MCF 10A (cell line): ENCODE measurements at regions of chr1 and their contacts with region 1.

Region 1: DNA sequence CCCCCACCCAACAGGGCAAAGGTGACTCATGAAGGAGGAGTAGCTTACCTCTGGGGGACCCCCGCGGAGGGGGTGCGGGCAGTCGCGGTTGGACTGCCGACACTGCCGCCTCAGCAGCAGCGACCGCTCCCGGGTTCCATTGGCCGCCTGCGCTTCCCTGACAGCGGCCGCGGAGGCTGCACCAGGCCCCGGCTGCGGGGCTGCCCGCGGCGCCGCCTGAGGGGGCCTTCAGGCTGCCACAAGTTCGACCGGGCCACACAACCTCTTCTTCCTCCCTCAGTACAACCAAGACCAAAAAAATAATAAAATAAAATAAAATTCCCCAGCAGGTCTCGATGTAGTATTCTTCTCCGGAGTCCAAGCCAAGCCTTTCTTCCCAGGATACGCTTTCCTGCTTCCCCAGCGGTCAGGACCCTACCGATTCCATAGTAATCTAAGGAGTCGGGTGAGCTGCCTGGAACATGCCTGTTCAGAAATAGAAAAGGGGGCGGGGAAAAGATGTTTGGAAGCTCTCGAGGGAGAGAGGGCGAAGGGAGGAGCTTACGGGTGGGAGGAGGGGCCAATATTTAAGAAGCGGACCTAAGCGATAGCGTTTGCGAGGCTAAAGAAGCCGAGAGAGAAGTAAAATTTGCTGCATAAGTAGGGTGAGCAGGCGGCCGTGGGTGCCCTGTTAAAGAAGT is at the start of gene PI4KB:
- DNase-seq: peak; percentile 100
- H3K4me3 Mint-ChIP-seq: peak within 1 kb of the TSS; percentile 89
- H3K27ac Mint-ChIP-seq: peak within 1 kb of the TSS; percentile 90
- H3K4me1 Mint-ChIP-seq: peaks cover 36% of the 10 kb centered on the region
- H3K27me3 Mint-ChIP-seq: no peaks in the 10 kb centered on the region
- CTCF ChIP-seq: no peak
- total RNA-seq, gene PI4KB: 75.3 and 90.1 TPM in 2 replicates

Region 2: DNA sequence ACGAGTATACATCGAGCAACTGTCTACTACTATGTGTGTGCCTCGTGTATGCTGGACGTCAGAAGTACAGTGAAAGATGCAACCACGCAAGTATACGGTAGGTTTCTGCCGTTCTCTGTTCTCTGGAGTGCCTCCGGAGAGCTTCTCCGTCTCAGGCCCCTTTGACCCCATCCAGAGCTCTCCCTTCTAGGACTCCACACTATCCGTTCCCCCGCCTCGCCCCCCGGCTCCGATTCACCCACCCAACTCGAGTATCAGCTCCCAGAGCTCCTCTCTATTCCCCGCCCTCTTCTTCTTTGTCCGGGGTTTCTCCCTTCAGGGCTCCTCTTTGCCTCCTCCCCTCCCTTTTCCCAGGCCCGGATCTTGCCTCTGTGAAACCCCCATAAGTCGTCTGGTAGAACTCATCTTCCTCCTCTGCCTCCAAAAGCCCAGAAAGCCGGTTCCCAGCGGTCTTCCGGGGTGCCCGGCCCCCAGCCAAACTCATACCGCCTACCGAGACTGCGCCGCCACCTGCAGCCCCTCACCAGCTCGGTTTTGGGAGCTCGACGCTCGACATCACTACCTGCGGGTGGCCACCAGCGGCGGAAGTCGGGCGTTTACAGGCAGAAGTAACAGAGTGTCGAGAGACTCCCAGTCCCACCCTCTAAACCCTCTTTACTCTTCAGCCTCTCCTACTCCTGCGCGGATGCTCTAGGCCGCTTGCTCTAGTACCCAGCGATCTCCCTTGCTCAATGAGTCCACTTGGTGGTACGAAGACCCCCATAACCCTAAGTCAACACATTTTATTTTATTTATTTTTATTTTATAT is 137.5 kb before region 1 on chr1 and contains the start of gene VPS72:
- CTCF ChIA-PET with region 1: no interaction called
- POLR2A ChIA-PET with region 1: interaction called, 15 read pairs
- intact Hi-C with region 1: loop called (anchors 5 kb)
- DNase-seq: peak; percentile 93
- H3K4me3 Mint-ChIP-seq: peak within 1 kb of the TSS; percentile 83
- H3K27ac Mint-ChIP-seq: peak within 1 kb of the TSS; percentile 90
- H3K4me1 Mint-ChIP-seq: peaks cover 33% of the 10 kb centered on the region
- H3K27me3 Mint-ChIP-seq: no peaks in the 10 kb centered on the region
- CTCF ChIP-seq: no peak
- total RNA-seq, gene VPS72: 106 and 108 TPM in 2 replicates

Region 3: DNA sequence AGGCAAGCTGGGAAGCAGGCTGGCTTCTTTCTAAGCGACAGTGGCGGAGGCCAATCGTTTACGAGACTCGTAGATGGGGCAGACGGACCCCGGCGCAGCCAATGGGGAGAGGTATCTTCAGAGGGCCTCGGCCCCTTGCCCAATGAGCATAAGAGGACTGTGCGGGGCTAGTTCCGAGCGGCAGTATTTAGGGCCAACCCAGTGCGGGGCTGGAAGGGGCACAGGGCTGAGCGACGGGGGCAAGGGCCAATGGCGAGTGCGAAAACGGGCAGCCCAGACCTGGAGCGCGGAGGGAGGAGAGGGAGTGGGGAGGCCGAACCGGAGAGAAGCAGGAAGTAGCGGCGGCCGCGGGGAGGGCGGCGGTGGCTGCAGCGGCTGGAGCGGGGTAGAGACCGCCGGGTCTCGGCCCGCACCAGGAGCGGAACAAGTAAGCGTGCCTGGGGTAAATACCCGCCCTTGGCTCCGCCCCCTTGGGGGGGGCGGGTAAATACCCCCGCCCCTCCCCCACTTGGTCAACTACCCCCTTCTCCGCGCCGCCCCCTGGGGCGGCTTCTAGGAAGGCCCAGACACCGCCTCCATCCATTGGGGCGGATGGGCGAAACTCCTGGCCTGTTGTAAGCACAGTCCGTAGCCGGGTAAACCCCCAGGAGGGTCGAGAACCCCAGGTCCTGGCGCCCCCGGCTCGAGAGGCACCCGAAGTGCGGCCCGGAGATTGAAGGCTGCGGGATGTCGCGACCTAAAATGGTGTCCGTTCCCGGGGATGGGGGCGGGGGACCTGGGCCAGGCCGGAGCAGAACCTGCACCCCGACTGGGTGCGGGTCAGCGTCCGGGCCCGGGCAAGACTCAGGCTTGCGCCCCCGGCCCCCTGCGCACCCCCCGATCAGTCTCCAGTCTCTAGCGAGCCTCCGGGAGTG is 45.1 kb before region 1 on chr1 and contains the start of gene ZNF687:
- CTCF ChIA-PET with region 1: interaction called, 11 read pairs
- POLR2A ChIA-PET with region 1: interaction called, 83 read pairs
- intact Hi-C with region 1: loop called (anchors 5 kb)
- DNase-seq: peak; percentile 100
- H3K4me3 Mint-ChIP-seq: peak within 1 kb of the TSS; percentile 97
- H3K27ac Mint-ChIP-seq: peak within 1 kb of the TSS; percentile 99
- H3K4me1 Mint-ChIP-seq: peaks cover 19% of the 10 kb centered on the region
- H3K27me3 Mint-ChIP-seq: peaks cover 9% of the 10 kb centered on the region
- CTCF ChIP-seq: no peak
- total RNA-seq, gene ZNF687: 26.3 and 27.5 TPM in 2 replicates

Region 4: DNA sequence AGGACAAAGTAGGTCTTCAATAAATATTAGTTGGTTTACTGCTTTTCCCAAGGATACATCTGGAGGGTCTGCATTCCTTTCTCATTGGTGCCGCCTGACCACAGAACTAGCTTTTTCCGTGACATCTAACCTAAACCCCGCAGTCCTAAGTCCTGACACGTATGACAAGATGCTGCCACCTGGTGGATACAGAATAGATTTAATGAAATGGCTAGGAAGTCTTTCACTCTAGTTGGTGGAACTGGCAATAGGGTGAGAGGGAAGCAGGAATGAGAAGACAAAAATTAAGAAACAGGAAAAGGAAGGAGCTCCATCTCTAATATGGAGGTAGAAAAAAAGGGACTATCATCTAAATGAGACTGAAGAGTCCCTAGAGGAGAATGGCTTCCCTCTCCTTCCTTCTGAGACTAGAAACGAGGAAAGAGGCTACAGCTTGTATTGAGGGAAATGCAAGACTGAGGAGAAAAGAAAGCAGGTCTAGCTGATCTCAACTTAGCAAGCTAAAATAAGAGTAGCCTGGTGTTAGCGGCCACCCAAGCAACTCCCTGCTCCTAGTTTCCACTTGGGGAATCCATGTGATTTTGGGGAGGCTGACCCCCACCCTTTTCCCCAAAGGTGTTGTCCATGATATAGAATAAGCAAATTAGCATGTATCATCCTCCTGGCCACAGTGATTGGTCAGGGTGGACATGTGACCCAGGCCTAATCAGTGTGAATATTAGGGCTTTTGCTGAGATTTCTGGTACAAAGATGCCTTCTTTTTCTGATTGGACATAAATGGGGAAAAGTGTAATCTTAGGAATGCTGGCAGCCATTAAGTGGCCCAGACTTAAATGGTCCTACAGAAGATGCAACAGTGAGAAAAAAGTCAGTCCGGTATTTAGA is 13.7 kb after region 1 on chr1:
- CTCF ChIA-PET with region 1: interaction called, 214 read pairs
- POLR2A ChIA-PET with region 1: interaction called, 102 read pairs
- intact Hi-C with region 1: loop called (anchors 1 kb)
- DNase-seq: peak; percentile 94
- H3K4me3 Mint-ChIP-seq: no peak overlapping the region
- H3K27ac Mint-ChIP-seq: no peak overlapping the region
- H3K4me1 Mint-ChIP-seq: peaks cover 11% of the 10 kb centered on the region
- H3K27me3 Mint-ChIP-seq: no peaks in the 10 kb centered on the region
- CTCF ChIP-seq: peak; percentile 74

Region 5: DNA sequence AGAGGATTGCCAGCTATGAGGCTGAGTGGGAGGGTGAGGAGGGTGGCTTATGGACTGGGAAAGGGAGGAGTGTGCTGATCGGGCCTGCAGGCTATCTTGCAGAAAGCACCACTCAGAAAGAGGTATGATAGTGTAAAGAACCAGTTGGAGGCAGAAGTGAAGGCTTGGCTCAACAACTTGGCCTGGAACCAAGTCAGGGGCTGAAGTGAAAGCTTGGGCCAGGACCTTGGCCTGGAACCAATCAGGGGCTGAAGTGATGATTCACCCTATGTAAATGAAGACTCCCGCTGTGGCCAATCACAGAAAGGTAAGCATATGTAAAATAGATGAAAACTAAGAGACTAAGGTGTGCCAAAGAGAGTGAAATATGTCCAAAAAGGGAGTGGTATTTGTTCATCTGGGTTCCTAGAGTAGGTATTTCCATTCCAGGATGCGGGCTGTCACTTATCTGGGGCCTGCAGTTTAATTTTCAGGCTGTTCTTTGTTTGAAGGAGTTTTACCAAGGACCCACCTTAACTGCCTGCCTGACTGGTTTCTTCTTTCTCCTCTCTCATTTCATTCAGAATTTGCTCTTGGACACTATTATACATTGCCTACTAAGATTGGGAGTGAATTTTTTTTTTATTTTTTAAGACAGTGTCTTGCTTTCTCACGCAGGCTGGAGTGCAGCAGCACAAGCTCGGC is 24.8 kb after region 1 on chr1:
- CTCF ChIA-PET with region 1: interaction called, 3 read pairs
- POLR2A ChIA-PET with region 1: interaction called, 19 read pairs
- intact Hi-C with region 1: no loop called
- DNase-seq: peak; percentile 97
- H3K4me3 Mint-ChIP-seq: no peak overlapping the region
- H3K27ac Mint-ChIP-seq: peak overlapping the region; percentile 8
- H3K4me1 Mint-ChIP-seq: peaks cover 14% of the 10 kb centered on the region
- H3K27me3 Mint-ChIP-seq: no peaks in the 10 kb centered on the region
- CTCF ChIP-seq: no peak

Region 6: GRCh38 chr1:151762941-151763921 is 435.9 kb after region 1 on chr1 and contains the start of gene MRPL9:
- CTCF ChIA-PET with region 1: no interaction called
- POLR2A ChIA-PET with region 1: interaction called, 11 read pairs
- intact Hi-C with region 1: no loop called
- DNase-seq: peak; percentile 84
- H3K4me3 Mint-ChIP-seq: peak within 1 kb of the TSS; percentile 92
- H3K27ac Mint-ChIP-seq: peak within 1 kb of the TSS; percentile 97
- H3K4me1 Mint-ChIP-seq: peaks cover 17% of the 10 kb centered on the region
- H3K27me3 Mint-ChIP-seq: no peaks in the 10 kb centered on the region
- CTCF ChIP-seq: no peak
- total RNA-seq, gene MRPL9: 145 and 146 TPM in 2 replicates